ENCODE measurements at regions of chr10 and their contacts with region 1.

Region 1: DNA sequence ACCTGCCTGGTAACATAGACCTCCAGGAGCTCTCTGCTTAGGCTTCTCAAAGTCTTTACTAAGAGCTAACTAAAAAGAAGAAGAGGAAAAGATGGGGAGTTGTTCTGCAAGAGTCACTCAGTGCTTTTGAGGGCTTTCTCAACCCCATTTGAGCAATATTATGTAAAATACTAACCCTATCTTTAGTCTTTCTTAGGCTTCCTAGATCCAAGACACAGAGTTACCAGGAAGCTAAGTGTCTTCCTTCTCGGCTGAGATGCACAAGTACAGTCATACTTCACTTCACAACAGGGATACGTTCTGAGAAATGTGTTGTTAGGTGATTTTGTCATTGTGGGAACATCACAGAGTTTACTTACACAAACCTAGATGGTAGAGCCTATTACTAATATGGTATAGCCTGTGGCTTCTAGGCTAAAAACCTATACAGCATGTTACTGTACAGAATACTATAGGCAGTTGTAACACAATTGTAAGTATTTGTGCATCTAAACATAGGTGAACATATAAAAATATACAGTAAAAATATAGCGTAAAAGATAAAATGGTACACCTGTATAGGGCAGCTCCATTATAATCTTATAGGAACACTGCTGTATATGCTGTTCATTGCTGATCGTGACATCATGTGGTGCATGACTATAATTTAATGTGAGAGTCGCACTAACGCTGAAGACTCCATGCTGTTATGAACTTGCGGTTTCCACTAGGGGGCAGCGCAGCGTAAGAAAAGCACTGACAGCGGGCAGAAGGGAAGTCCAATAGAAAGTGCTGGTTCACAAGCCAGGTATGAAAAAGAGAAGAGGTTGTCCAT is 16.3 kb downstream of the ANKRD22 start:
- DNase-seq: peak; percentile 80 to 86
- H3K4me3 ChIP-seq: no peak overlapping the region
- H3K4me3 Mint-ChIP-seq: no peak overlapping the region
- H3K27ac Mint-ChIP-seq: no peak overlapping the region
- H3K4me1 ChIP-seq: peaks cover 22% of the 10 kb centered on the region
- H3K4me1 Mint-ChIP-seq: peaks cover 7% of the 10 kb centered on the region
- H3K27me3 ChIP-seq: no peaks in the 10 kb centered on the region
- H3K27me3 Mint-ChIP-seq: no peaks in the 10 kb centered on the region
- CTCF ChIP-seq: peak; percentile 84 to 87

Region 2: DNA sequence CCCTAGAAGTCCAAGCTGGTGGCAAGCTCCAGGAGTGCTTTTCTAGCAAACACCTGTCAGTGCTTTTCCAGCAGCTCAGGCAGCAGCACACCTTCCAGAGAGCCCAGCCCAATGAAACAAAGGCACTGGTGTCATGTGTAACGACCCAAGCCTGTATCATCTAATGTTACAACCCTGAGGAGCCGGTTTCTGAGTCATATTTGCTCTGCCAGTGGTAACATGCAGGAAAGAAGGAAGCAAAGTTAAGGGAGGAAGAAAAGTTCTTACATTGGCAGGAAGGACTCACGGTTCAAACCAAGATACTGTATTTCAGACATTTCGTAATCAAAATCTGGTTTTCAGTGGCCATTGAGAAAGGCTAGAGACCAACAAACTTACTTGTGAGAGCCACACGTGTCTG is 16.4 kb after region 1 on chr10 and contains the start of gene ANKRD22:
- CTCF ChIA-PET with region 1: no interaction called
- POLR2A ChIA-PET with region 1: no interaction called
- intact Hi-C with region 1: no loop called
- DNase-seq: peak; percentile 52 to 59
- H3K4me3 ChIP-seq: no peak within 1 kb of the TSS
- H3K4me3 Mint-ChIP-seq: peak within 1 kb of the TSS; percentile 40
- H3K27ac Mint-ChIP-seq: peak within 1 kb of the TSS; percentile 23
- H3K4me1 ChIP-seq: peaks cover 13% of the 10 kb centered on the region
- H3K4me1 Mint-ChIP-seq: peaks cover 7% of the 10 kb centered on the region
- H3K27me3 ChIP-seq: no peaks in the 10 kb centered on the region
- H3K27me3 Mint-ChIP-seq: no peaks in the 10 kb centered on the region
- CTCF ChIP-seq: no peak
- total RNA-seq, gene ANKRD22: not detected in 2 replicates

Region 3: DNA sequence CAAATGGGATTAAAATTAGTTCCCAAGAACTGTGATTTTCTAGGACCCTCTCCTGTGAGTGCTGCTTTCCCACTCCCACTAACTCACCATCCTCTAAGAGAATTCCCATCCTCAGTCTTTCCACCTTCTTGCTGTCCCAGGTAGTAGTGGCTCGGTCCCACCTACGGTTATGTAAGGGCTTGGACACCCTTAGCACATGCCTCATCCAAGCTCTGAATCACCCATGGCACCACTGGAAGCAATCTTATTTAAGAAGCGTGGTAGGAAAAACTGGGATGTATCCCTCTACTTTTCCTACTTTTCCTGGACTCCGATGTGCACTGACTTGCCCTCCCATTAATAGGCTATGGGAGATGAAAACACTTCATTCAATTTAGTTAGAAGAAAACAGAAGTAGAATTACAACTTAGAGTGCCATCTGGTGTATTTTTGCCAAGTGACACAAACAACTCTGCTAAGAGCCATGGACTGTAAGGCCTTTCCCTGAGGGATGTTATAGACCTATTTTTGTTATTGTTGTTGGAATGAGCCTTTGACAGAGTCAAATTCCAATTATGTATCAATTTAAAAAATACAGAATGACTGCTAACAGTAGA is 30.1 kb after region 1 on chr10:
- CTCF ChIA-PET with region 1: no interaction called
- POLR2A ChIA-PET with region 1: no interaction called
- intact Hi-C with region 1: loop called (anchors 1 kb)
- DNase-seq: no peak
- H3K4me3 ChIP-seq: no peak overlapping the region
- H3K4me3 Mint-ChIP-seq: no peak overlapping the region
- H3K27ac Mint-ChIP-seq: no peak overlapping the region
- H3K4me1 ChIP-seq: no peaks in the 10 kb centered on the region
- H3K4me1 Mint-ChIP-seq: no peaks in the 10 kb centered on the region
- H3K27me3 ChIP-seq: no peaks in the 10 kb centered on the region
- H3K27me3 Mint-ChIP-seq: peaks cover 16% of the 10 kb centered on the region
- CTCF ChIP-seq: no peak

Region 4: GRCh38 chr10:88880282-88881076 is 45.2 kb after region 1 on chr10:
- CTCF ChIA-PET with region 1: no interaction called
- POLR2A ChIA-PET with region 1: no interaction called
- intact Hi-C with region 1: loop called (anchors 5 kb)
- DNase-seq: peak; percentile 68 to 70
- H3K4me3 ChIP-seq: peak overlapping the region; percentile 92
- H3K4me3 Mint-ChIP-seq: peak overlapping the region; percentile 90
- H3K27ac Mint-ChIP-seq: no peak overlapping the region
- H3K4me1 ChIP-seq: no peaks in the 10 kb centered on the region
- H3K4me1 Mint-ChIP-seq: no peaks in the 10 kb centered on the region
- H3K27me3 ChIP-seq: no peaks in the 10 kb centered on the region
- H3K27me3 Mint-ChIP-seq: peaks cover 15% of the 10 kb centered on the region
- CTCF ChIP-seq: peak in 1 of 2 experiments; percentile 14

Region 5: DNA sequence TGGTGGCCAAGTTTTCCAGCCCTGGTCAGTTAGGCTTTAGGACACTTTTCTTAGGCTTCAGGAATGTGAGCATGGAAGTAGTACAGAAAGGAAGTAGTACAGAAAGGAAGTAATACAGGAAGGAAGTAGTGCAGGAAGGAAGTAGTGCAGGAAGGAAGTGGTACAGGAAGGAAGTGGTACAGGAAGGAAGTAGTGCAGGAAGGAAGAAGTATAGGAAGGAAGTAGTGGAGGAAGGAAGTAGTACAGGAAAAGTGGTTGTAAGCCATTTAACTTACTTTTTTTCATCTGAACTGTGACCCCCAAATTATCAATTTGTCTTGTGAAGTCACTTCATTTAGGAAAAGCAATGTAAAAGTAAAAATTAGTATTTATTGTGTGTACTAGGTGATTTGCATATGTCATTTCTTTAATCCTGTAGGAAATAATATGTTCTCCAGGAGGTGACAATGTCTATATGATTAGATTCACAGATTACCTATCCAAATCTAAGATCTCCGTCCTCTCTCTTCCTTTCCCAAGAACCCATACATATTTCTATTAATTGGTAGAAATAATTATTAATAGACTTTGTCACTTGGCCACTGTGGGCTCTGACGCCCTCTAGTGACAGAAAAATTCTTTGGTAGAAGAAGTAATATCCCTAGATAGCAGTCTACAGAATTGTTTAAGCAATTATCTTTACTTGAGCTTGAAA is 151.4 kb after region 1 on chr10:
- CTCF ChIA-PET with region 1: no interaction called
- POLR2A ChIA-PET with region 1: no interaction called
- intact Hi-C with region 1: loop called (anchors 1 kb)
- DNase-seq: peak in 1 of 2 experiments; percentile 38
- H3K4me3 ChIP-seq: no peak overlapping the region
- H3K4me3 Mint-ChIP-seq: no peak overlapping the region
- H3K27ac Mint-ChIP-seq: no peak overlapping the region
- H3K4me1 ChIP-seq: peaks cover 5% of the 10 kb centered on the region; the same call in 1 of the 2 replicates
- H3K4me1 Mint-ChIP-seq: no peaks in the 10 kb centered on the region
- H3K27me3 ChIP-seq: peaks cover 2% of the 10 kb centered on the region
- H3K27me3 Mint-ChIP-seq: peaks cover 26% of the 10 kb centered on the region
- CTCF ChIP-seq: peak; percentile 43 to 72

Region 6: GRCh38 chr10:89019569-89020327 is 184.4 kb after region 1 on chr10:
- CTCF ChIA-PET with region 1: no interaction called
- POLR2A ChIA-PET with region 1: no interaction called
- intact Hi-C with region 1: no loop called
- DNase-seq: no peak
- H3K4me3 ChIP-seq: no peak overlapping the region
- H3K4me3 Mint-ChIP-seq: no peak overlapping the region
- H3K27ac Mint-ChIP-seq: no peak overlapping the region
- H3K4me1 ChIP-seq: no peaks in the 10 kb centered on the region
- H3K4me1 Mint-ChIP-seq: no peaks in the 10 kb centered on the region
- H3K27me3 ChIP-seq: no peaks in the 10 kb centered on the region
- H3K27me3 Mint-ChIP-seq: peaks cover 7% of the 10 kb centered on the region
- CTCF ChIP-seq: no peak

Region 7: GRCh38 chr10:89217057-89217990 is 382.0 kb after region 1 on chr10:
- CTCF ChIA-PET with region 1: no interaction called
- POLR2A ChIA-PET with region 1: no interaction called
- intact Hi-C with region 1: loop called (anchors 5 kb)
- DNase-seq: peak in 1 of 2 experiments; percentile 57
- H3K4me3 ChIP-seq: no peak overlapping the region
- H3K4me3 Mint-ChIP-seq: no peak overlapping the region
- H3K27ac Mint-ChIP-seq: no peak overlapping the region
- H3K4me1 ChIP-seq: 0 out of 2 replicates have a peak, but pooled peaks cover 4% of the 10 kb centered on the region
- H3K4me1 Mint-ChIP-seq: no peaks in the 10 kb centered on the region
- H3K27me3 ChIP-seq: no peaks in the 10 kb centered on the region
- H3K27me3 Mint-ChIP-seq: no peaks in the 10 kb centered on the region
- CTCF ChIP-seq: peak; percentile 63 to 64

Measured in Caco-2 (cell line).